Activated T-helper 1 cell treated with anti-CD3 and anti-CD28 coated beads, Interleukin-12 subunit alpha, Interleukin-12 subunit beta, Interleukin-2, Interleukin-4 antibody, amounts not matched to agents 30 ng/mL and 10 ng/mL and 1 ng/mL, durations not matched to agents 14 hours and 24 hours and 36 hours (primary cell): ENCODE measurements at regions of chr1 and their contacts with region 1.

Region 1: DNA sequence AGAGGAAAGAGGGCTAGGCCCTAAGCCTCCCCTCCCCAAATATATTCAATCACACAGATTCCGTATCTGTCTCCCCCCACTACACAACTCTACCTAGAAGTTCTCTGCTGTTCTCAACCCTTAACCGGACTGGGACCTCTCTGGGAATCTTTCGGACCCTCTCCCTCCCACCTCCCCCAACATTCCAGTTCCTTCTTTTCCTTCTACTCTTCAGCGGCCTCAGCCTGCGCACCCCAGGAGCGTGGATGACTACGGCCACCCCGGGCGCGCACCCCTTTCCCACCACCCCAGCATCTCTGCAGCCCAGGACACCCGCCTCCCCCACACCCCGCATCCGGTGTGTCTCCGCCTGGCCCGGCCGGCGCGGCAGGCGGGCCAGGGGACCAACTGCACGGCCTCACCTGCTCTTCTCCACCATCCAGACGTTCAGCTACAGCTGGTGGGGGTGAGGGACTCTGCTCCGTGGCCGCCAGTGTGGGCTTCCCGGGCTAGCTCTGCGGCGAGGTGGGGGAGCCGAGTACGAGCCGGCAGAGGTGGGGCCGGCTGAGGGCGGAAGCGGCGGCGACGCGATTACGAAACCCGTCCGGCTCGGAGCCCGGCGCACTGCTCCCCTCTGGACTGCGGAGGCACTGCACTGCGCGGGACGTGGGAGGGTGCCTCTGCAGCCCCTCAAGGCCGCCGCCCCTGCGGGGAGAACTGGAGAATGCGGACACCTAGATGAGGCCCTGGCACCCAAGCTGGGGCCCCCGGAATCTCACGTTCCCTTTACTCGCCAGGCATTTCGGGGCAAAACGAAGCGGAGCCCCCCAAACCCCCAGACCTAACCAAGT is at the start of gene CDC42SE1:
- DNase-seq: peak; percentile 81
- H3K4me3 Mint-ChIP-seq: peak within 1 kb of the TSS; percentile 95
- H3K27ac Mint-ChIP-seq: peak within 1 kb of the TSS; percentile 97
- H3K4me1 Mint-ChIP-seq: peaks cover 65% of the 10 kb centered on the region
- H3K27me3 Mint-ChIP-seq: no peaks in the 10 kb centered on the region
- total RNA-seq, gene CDC42SE1: 216 and 219 TPM in 2 replicates

Region 2: GRCh38 chr1:151024540-151025146 is 34.6 kb before region 1 on chr1:
- intact Hi-C with region 1: loop called (anchors 2 kb)
- DNase-seq: peak; percentile 71
- H3K4me3 Mint-ChIP-seq: peak overlapping the region; percentile 26
- H3K27ac Mint-ChIP-seq: no peak overlapping the region
- H3K4me1 Mint-ChIP-seq: peaks cover 6% of the 10 kb centered on the region
- H3K27me3 Mint-ChIP-seq: no peaks in the 10 kb centered on the region

Region 3: DNA sequence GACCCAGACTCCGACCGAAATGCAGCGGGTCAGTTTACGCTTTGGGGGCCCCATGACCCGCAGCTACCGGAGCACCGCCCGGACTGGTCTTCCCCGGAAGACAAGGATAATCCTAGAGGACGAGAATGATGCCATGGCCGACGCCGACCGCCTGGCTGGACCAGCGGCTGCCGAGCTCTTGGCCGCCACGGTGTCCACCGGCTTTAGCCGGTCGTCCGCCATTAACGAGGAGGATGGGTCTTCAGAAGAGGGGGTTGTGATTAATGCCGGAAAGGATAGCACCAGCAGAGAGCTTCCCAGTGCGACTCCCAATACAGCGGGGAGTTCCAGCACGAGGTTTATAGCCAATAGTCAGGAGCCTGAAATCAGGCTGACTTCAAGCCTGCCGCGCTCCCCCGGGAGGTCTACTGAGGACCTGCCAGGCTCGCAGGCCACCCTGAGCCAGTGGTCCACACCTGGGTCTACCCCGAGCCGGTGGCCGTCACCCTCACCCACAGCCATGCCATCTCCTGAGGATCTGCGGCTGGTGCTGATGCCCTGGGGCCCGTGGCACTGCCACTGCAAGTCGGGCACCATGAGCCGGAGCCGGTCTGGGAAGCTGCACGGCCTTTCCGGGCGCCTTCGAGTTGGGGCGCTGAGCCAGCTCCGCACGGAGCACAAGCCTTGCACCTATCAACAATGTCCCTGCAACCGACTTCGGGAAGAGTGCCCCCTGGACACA is 11.2 kb before region 1 on chr1:
- intact Hi-C with region 1: loop called (anchors 1 kb)
- DNase-seq: peak; percentile 42
- H3K4me3 Mint-ChIP-seq: peak overlapping the region; percentile 86
- H3K27ac Mint-ChIP-seq: peak overlapping the region; percentile 79
- H3K4me1 Mint-ChIP-seq: peaks cover 59% of the 10 kb centered on the region
- H3K27me3 Mint-ChIP-seq: no peaks in the 10 kb centered on the region

Region 4: GRCh38 chr1:151070474-151071276 is 11.4 kb after region 1 on chr1 and contains the start of gene GABPB2:
- intact Hi-C with region 1: loop called (anchors 1 kb)
- DNase-seq: peak; percentile 81
- H3K4me3 Mint-ChIP-seq: peak within 1 kb of the TSS; percentile 98
- H3K27ac Mint-ChIP-seq: peak within 1 kb of the TSS; percentile 100
- H3K4me1 Mint-ChIP-seq: peaks cover 17% of the 10 kb centered on the region
- H3K27me3 Mint-ChIP-seq: no peaks in the 10 kb centered on the region
- total RNA-seq, gene GABPB2: 19.4 and 21.5 TPM in 2 replicates

Region 5: GRCh38 chr1:151085953-151086559 is 26.8 kb after region 1 on chr1:
- intact Hi-C with region 1: no loop called
- DNase-seq: no peak
- H3K4me3 Mint-ChIP-seq: no peak overlapping the region
- H3K27ac Mint-ChIP-seq: no peak overlapping the region
- H3K4me1 Mint-ChIP-seq: no peaks in the 10 kb centered on the region
- H3K27me3 Mint-ChIP-seq: no peaks in the 10 kb centered on the region

Region 6: GRCh38 chr1:151156515-151156819 is 97.2 kb after region 1 on chr1 and contains the start of gene TNFAIP8L2:
- intact Hi-C with region 1: loop called (anchors 1 kb)
- DNase-seq: peak; percentile 72
- H3K4me3 Mint-ChIP-seq: peak within 1 kb of the TSS; percentile 92
- H3K27ac Mint-ChIP-seq: peak within 1 kb of the TSS; percentile 99
- H3K4me1 Mint-ChIP-seq: peaks cover 42% of the 10 kb centered on the region
- H3K27me3 Mint-ChIP-seq: no peaks in the 10 kb centered on the region
- total RNA-seq, gene TNFAIP8L2: 38.0 and 38.5 TPM in 2 replicates

Region 7: GRCh38 chr1:151254217-151255213 is 195.2 kb after region 1 on chr1 and contains the start of gene PSMD4:
- intact Hi-C with region 1: loop called (anchors 2 kb)
- DNase-seq: peak; percentile 91
- H3K4me3 Mint-ChIP-seq: peak within 1 kb of the TSS; percentile 98
- H3K27ac Mint-ChIP-seq: peak within 1 kb of the TSS; percentile 88
- H3K4me1 Mint-ChIP-seq: peaks cover 17% of the 10 kb centered on the region
- H3K27me3 Mint-ChIP-seq: no peaks in the 10 kb centered on the region
- total RNA-seq, gene PSMD4: 276 and 285 TPM in 2 replicates

Region 8: DNA sequence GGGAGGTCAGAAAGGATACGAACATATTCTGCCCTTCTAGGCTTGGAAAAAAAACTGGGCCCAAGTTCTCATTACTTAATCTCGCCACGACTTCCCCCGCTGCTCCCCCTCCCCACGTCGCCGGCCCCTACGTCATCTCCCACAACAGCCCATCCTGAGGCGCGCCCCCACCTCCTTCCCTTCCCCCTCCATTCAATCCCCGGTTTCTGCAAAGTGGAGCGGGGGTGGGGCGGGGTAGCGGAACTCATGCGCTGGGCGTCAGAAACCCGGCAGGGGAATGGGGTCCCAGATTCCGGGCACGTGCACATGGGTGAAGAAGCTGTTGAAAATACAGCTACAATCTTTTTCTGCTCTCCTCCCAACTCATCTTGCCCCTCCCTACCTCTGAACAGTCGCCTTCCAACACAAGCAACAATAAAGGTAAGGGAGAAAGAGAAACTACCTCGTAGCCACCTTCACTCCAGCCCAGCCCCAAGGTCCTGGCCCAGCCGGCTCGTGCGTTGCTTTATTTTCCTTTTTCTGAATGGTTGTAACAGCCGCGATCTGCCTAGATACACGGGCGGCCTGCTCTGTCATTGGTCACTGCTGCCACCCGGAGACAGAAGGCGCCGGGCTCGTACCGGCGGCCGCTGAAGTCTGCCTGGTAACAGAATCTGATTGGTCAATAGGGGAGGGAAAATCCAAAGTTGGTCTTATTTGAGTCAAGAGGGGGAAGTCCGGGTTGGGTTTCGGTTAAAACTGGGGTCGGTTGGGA is 287.7 kb after region 1 on chr1 and contains the start of gene RFX5:
- intact Hi-C with region 1: loop called (anchors 5 kb)
- DNase-seq: peak; percentile 95
- H3K4me3 Mint-ChIP-seq: peak within 1 kb of the TSS; percentile 95
- H3K27ac Mint-ChIP-seq: peak within 1 kb of the TSS; percentile 99
- H3K4me1 Mint-ChIP-seq: peaks cover 45% of the 10 kb centered on the region
- H3K27me3 Mint-ChIP-seq: no peaks in the 10 kb centered on the region
- total RNA-seq, gene RFX5: 78.1 and 83.4 TPM in 2 replicates

Region 9: GRCh38 chr1:151539990-151540981 is 481.0 kb after region 1 on chr1 and contains the start of gene TUFT1:
- intact Hi-C with region 1: no loop called
- DNase-seq: peak; percentile 91
- H3K4me3 Mint-ChIP-seq: peak within 1 kb of the TSS; percentile 91
- H3K27ac Mint-ChIP-seq: peak within 1 kb of the TSS; percentile 62
- H3K4me1 Mint-ChIP-seq: peaks cover 16% of the 10 kb centered on the region
- H3K27me3 Mint-ChIP-seq: peaks cover 10% of the 10 kb centered on the region
- total RNA-seq, gene TUFT1: 1.9 and 2.3 TPM in 2 replicates